Aorta (tissue), 5 donors: ENCODE measurements at regions of chrX and their contacts with region 1.

Region 1: GRCh38 chrX:11665144-11666111 is at the start of gene ARHGAP6:
- DNase-seq: peak; percentile 57 to 81
- ATAC-seq: peak; percentile 86
- H3K4me3 ChIP-seq: peak within 1 kb of the TSS; percentile 21 to 40
- H3K27ac ChIP-seq: peak within 1 kb of the TSS in 1 of 2 donors; percentile 23
- H3K4me1 ChIP-seq: no peaks in the 10 kb centered on the region
- H3K27me3 ChIP-seq: no peaks in the 10 kb centered on the region
- total RNA-seq, gene ARHGAP6: 15.1 to 19.5 TPM

Region 2: DNA sequence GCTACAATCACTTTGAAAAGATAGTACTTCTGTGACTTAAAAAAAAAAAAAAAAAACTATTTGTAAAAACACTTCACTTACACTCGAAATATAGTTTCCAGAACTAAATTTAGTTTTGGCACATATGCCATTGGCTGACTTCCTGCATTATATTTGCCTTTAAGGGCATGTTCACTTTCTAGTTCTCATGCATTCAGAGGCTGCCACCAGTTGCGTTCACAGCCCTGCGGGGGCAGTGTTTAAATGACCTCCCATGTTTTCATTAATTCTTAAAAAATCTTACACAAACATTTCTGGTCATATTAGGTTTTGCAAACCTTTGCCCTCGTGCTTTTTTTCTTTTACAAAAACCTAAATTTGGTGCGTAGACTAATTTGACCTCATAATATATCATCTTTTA is 12.7 kb after region 1 on chrX:
- intact Hi-C with region 1: no loop called
- DNase-seq: no peak
- ATAC-seq: peak; percentile 48
- H3K4me3 ChIP-seq: no peak overlapping the region
- H3K27ac ChIP-seq: no peak overlapping the region
- H3K4me1 ChIP-seq: no peaks in the 10 kb centered on the region
- H3K27me3 ChIP-seq: no peaks in the 10 kb centered on the region

Region 3: DNA sequence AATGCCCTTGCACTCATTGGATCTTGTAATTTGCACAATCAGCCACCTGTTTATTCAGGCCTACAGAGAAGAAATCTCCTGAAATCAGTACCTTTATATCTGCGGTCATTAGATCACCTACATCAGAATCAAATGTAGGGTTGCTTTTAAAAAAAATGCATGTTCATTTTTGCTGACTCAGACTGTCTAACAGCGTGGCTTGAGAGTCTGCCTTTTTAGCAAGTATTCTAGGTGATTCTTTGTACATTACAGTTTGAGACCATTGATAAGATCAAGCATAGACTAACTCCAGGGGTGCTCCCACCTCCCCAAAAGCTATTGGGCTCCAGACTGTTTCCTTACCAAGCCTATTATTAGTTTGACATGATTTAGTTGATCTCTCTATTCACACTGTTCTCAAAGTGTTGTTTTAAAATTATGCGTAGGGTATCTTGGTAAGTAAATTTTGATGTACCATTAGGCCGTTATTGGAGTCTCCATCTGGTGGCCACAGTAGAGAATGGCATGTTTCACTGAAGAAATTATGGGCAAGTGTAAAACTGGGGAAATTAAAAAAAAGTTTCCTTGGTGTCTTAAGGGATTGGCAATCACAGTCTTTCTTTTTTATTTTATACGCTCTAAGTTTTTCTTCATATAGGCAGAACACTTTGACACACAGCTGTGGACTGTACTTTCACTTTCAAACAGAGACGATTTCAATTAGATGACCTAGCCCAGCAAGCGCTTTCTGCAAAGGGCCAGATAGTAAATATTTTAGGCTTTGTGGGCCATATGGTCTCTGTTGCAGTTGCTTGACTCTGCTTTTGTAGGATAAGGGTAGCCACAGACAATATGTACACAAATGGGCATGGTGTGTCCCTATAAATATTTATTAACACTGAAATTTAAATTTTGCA is 58.9 kb after region 1 on chrX:
- intact Hi-C with region 1: loop called in 1 of 2 experiments (anchors 2 kb)
- DNase-seq: no peak
- ATAC-seq: peak; percentile 69
- H3K4me3 ChIP-seq: no peak overlapping the region
- H3K27ac ChIP-seq: no peak overlapping the region
- H3K4me1 ChIP-seq: no peaks in the 10 kb centered on the region
- H3K27me3 ChIP-seq: no peaks in the 10 kb centered on the region